A673 (cell line): ENCODE measurements at regions of chr18 and their contacts with region 1.

Region 1: GRCh38 chr18:35460077-35460476 is 37.7 kb downstream of the INO80C start:
- DNase-seq: no peak
- H3K4me3 ChIP-seq: no peak overlapping the region
- H3K27ac ChIP-seq: no peak overlapping the region
- H3K4me1 ChIP-seq: no peaks in the 10 kb centered on the region
- H3K27me3 ChIP-seq: no peaks in the 10 kb centered on the region
- CTCF ChIP-seq: no peak

Region 2: DNA sequence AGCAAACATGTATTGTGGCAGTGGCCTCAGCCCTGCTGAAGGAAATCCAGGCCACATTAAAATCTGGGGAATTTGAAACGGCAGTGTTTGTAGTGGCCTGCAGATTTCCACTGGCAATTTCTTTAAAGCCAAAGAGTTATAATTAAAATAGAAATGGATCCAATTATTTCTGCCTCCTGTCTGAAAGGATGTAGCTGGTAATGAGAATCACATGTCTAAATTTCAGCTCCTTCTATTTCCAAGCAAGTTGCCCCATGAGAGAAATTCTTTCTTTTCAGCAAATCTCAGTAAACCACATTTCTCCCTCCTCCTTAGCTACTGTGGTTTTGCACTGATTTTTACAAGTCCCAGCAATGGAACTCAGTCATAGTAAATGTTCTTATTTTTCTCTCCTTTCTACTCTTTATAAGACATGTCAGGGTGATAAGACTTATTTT is 27.5 kb before region 1 on chr18:
- CTCF ChIA-PET with region 1: no interaction called
- POLR2A ChIA-PET with region 1: interaction called, 12 read pairs
- intact Hi-C with region 1: no loop called
- DNase-seq: no peak
- H3K4me3 ChIP-seq: no peak overlapping the region
- H3K27ac ChIP-seq: no peak overlapping the region
- H3K4me1 ChIP-seq: no peaks in the 10 kb centered on the region
- H3K27me3 ChIP-seq: no peaks in the 10 kb centered on the region
- CTCF ChIP-seq: no peak